ENCODE measurements at regions of chr15 and their contacts with region 1.

Region 1: DNA sequence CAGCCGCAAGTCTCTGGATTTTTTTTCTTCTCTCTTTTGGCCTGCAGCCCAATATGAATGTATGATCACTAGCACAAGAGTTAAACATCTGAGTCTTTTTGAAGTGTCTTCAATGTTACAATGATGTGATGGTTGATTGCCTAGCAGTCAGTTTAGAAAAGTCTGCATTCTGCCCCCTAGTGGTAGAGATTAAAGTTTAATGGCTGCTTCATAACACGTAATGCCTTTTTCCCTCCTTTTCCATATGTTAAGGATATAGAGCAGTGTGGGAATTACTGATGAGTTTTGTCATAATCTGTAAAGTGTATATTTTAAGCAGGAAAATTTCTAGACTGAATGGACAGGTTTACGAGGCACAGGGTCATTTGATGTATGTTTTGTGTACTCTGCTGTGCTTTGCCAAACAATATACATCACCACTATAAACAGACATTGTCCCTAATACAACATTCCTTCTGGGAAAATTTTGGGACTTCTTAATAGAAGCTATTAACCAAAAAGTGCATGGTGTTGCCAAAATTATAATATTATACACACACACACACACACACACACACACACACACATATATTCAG is 1038.5 kb upstream of the NR2F2 start:
- DNase-seq: no peak
- H3K4me3 Mint-ChIP-seq: no peak overlapping the region
- H3K27ac Mint-ChIP-seq: no peak overlapping the region
- H3K4me1 Mint-ChIP-seq: no peaks in the 10 kb centered on the region
- H3K27me3 Mint-ChIP-seq: peaks cover 18% of the 10 kb centered on the region

Region 2: GRCh38 chr15:95259513-95259912 is 32.5 kb before region 1 on chr15:
- CTCF ChIA-PET with region 1: interaction called, 20 read pairs
- POLR2A ChIA-PET with region 1: no interaction called
- DNase-seq: peak; percentile 55
- H3K4me3 Mint-ChIP-seq: no peak overlapping the region
- H3K27ac Mint-ChIP-seq: no peak overlapping the region
- H3K4me1 Mint-ChIP-seq: no peaks in the 10 kb centered on the region
- H3K27me3 Mint-ChIP-seq: peaks cover 7% of the 10 kb centered on the region

Region 3: DNA sequence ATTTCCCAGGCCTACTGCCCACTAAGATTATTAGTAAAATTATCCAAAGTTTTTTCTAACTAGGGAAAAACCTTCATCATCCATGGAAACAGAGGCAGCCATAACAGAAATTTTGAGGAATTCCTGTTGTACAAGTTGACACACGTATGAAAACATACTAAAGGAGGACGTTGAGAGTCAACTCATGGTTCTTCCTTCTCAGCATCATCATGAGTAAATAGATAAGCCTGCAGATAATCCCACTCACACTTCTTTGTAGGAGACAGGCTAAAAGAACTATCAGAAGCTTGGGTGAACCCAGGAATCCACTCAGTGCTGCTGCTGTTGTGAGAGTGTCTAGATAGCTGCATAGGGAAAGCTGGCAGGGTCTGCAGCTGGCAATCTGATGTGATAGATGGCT is 343.7 kb after region 1 on chr15:
- CTCF ChIA-PET with region 1: no interaction called
- POLR2A ChIA-PET with region 1: no interaction called
- DNase-seq: no peak
- H3K4me3 Mint-ChIP-seq: no peak overlapping the region
- H3K27ac Mint-ChIP-seq: no peak overlapping the region
- H3K4me1 Mint-ChIP-seq: no peaks in the 10 kb centered on the region
- H3K27me3 Mint-ChIP-seq: no peaks in the 10 kb centered on the region